ENCODE measurements at regions of chr19 and their contacts with region 1.

Region 1: DNA sequence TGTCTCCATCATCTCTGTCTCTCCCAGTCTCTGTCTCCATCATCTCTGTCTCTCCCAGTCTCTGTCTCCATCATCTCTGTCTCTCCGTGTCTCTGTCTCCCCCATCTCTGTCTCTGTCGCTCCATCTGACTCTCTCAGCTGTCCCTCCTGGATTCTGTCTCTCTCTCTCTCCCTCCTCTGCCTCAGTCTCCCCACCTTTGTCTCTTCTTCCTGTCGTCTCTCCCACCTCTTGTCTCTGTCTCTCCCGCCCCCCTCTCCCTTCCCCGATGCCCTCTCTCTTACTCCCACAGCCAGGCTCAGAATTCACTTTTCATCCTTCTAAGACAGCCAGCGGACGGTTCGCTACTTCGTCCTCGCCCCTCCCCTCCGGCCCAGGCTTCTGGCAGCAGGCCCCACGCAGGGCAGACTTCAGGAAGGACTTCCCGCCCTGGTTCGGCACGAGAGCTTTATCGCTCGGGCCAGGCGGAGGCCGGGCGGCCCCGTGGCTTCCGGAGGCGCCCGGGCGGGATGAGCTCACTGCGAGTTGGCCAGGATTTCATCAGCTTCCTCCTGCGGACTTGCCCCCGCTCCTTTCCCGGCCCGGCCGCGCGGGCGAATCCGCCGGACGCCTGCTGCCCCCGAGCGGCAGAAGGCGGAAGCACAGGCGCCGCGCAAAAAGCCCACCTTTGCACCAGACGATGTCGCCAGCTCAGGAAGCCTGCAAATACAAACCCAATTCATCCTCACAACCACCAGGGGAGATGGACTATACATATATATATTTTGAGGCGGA is 12.4 kb upstream of the CCDC9 start:
- DNase-seq: peak; percentile 98
- H3K4me3 Mint-ChIP-seq: peak overlapping the region; percentile 85
- H3K27ac Mint-ChIP-seq: peak overlapping the region; percentile 97
- H3K4me1 Mint-ChIP-seq: peaks cover 25% of the 10 kb centered on the region
- H3K27me3 Mint-ChIP-seq: peaks cover 1% of the 10 kb centered on the region

Region 2: GRCh38 chr19:47035127-47036096 is 208.6 kb before region 1 on chr19:
- intact Hi-C with region 1: loop called (anchors 10 kb)
- DNase-seq: peak; percentile 100
- H3K4me3 Mint-ChIP-seq: peak overlapping the region; percentile 86
- H3K27ac Mint-ChIP-seq: peak overlapping the region; percentile 92
- H3K4me1 Mint-ChIP-seq: peaks cover 25% of the 10 kb centered on the region
- H3K27me3 Mint-ChIP-seq: peaks cover 10% of the 10 kb centered on the region

Region 3: DNA sequence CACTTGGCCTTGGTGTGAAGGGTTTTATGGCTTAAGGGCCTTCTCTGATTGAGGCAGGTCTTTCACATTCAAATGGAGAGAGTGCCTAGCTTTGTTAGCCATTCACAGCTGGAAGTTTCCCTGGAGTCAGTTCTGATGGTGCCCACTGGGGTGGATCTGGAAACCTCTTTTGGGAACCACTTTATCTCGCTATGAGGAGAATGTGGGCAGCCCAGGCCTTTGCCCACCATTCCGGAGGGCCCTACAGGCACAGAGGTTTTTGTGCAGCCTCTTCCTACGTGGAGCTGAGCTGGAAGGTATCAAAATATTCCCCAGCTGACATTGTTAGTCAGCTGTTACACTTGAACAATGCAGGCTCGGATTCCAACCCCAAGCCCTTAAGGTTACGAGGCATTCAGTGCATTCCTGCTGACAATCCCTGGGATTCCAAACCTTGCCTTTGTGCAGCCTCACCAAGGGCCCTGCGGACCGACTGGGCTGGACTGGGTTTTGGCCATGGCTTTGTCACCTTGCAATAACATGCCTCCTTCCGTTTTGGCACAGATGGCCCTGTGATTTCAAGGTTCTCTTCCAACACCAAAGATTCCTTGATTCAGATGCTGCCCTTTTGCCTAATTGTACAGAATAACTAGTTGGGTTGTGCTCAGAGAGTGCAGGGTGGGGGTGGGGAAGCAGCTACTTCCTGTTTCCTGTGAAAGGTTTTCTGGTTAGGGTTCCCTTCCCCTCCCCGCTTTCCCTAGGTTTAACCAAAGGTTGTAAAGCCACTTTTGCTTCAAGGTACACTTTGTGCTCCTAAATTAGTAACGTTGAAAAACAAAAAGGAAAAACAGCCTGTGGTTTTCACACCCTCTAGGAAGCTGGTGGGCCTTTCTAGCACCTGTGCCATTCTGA is 86.3 kb before region 1 on chr19:
- intact Hi-C with region 1: loop called (anchors 1 kb)
- DNase-seq: peak; percentile 78
- H3K4me3 Mint-ChIP-seq: peak overlapping the region; percentile 80
- H3K27ac Mint-ChIP-seq: peak overlapping the region; percentile 93
- H3K4me1 Mint-ChIP-seq: peaks cover 46% of the 10 kb centered on the region
- H3K27me3 Mint-ChIP-seq: no peaks in the 10 kb centered on the region

Region 4: GRCh38 chr19:47210689-47211316 is 33.2 kb before region 1 on chr19:
- intact Hi-C with region 1: loop called (anchors 1 kb)
- DNase-seq: peak; percentile 94
- H3K4me3 Mint-ChIP-seq: no peak overlapping the region
- H3K27ac Mint-ChIP-seq: peak overlapping the region; percentile 61
- H3K4me1 Mint-ChIP-seq: peaks cover 8% of the 10 kb centered on the region
- H3K27me3 Mint-ChIP-seq: no peaks in the 10 kb centered on the region

Region 5: GRCh38 chr19:47296036-47296435 is 52.1 kb after region 1 on chr19:
- intact Hi-C with region 1: no loop called
- DNase-seq: peak; percentile 95
- H3K4me3 Mint-ChIP-seq: no peak overlapping the region
- H3K27ac Mint-ChIP-seq: no peak overlapping the region
- H3K4me1 Mint-ChIP-seq: peaks cover 5% of the 10 kb centered on the region
- H3K27me3 Mint-ChIP-seq: no peaks in the 10 kb centered on the region

Region 6: GRCh38 chr19:47619763-47620162 is 375.8 kb after region 1 on chr19:
- intact Hi-C with region 1: no loop called
- DNase-seq: no peak
- H3K4me3 Mint-ChIP-seq: no peak overlapping the region
- H3K27ac Mint-ChIP-seq: no peak overlapping the region
- H3K4me1 Mint-ChIP-seq: peaks cover 4% of the 10 kb centered on the region
- H3K27me3 Mint-ChIP-seq: no peaks in the 10 kb centered on the region